ENCODE measurements at regions of chr1 and their contacts with region 1.

Region 1: DNA sequence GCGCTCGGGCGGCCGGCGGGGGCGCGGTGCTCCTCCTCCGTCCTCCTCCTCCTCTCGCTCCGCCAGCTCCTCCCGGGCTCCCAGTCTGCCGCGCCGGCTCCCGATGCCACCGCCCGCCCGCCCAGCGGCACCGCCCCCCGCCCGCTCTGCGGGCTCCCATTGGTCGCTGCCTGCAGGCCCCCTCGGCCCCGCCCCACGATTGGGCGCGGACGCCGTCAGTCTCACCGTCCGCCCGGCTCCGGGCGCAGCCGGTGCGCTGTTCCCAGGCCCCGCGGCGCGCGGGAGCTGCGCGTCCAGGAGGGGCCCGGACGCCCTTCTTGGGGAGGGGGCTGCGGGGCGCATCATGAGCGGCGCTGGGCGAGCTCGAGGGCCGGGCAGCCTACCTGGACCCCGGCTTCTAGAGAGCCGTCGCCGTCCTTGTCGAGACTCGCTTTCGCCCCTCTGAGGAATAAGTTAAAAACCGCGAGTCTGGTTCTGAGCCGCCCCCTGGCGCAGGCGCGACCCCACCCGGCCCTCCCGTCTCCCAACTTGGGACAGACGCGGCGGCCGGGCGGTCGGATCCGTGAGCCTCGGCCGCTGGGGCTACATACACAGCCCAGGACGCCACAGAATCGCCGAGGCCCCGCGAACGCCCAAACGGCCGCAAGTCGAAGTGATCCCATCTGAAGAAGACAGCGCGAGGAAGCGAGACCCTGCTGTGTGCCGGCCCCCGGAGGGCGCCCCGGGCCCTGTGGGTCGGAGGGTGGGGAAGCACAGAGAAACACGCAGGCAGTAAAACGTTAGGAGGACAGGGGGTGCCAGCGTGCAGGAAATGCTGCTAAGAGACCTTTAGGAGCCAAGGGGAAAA is at the start of gene SIPA1L2:
- DNase-seq: peak; percentile 97
- ATAC-seq: peak; percentile 88
- H3K4me3 ChIP-seq: peak within 1 kb of the TSS; percentile 77
- H3K27ac ChIP-seq: peak within 1 kb of the TSS; percentile 30
- H3K4me1 ChIP-seq: peaks cover 34% of the 10 kb centered on the region
- H3K27me3 ChIP-seq: no peaks in the 10 kb centered on the region
- CTCF ChIP-seq: peak; percentile 83
- total RNA-seq, gene SIPA1L2: 8.9 and 9.8 TPM in 2 replicates

Region 2: DNA sequence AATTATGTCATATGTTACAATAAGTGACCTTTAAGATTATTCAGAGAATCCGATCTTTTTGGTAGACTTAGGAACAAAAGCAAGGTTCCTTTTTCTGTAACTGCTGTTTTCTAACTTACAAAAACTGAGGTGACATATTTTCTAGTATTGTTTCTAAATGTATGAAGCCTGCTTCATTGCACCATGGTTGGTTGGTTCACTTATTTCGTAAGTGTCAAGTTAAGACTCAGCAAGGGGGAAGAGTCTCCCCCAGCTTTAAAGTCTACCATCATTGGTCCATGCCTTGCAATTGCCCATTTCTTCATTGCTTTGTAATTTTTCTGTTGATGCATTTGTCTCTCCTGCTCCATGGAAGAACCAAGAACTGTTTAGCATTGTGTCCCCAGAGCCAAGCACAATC is 866.8 kb before region 1 on chr1:
- CTCF ChIA-PET with region 1: interaction called, 4 read pairs
- POLR2A ChIA-PET with region 1: interaction called, 19 read pairs
- intact Hi-C with region 1: no loop called
- DNase-seq: no peak
- ATAC-seq: no peak
- H3K4me3 ChIP-seq: no peak overlapping the region
- H3K27ac ChIP-seq: no peak overlapping the region
- H3K4me1 ChIP-seq: peaks cover 10% of the 10 kb centered on the region; the same call in 1 of the 2 replicates
- H3K27me3 ChIP-seq: no peaks in the 10 kb centered on the region
- CTCF ChIP-seq: no peak

Region 3: DNA sequence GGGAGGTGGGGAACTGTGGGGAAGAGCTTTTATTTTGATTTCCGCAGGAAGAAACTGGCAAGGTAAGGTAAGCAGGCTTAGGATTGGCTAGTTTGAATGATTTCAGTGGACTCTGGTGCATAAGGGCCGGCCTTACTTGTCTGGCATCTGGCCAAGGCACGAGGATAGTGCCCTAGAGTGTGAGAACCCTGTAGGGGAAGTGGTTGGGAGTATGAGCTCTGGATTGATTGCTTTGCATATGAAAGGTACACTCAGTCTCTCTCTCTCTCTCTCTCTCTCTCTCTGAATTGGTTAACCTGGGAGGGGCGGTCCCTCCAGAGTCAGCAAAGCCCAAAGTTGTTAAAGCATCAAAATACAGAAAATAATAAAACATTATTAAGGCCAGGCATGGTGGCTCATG is 463.3 kb before region 1 on chr1:
- CTCF ChIA-PET with region 1: no interaction called
- POLR2A ChIA-PET with region 1: no interaction called
- intact Hi-C with region 1: loop called (anchors 1 kb)
- DNase-seq: no peak
- ATAC-seq: no peak
- H3K4me3 ChIP-seq: no peak overlapping the region
- H3K27ac ChIP-seq: no peak overlapping the region
- H3K4me1 ChIP-seq: peaks cover 29% of the 10 kb centered on the region
- H3K27me3 ChIP-seq: no peaks in the 10 kb centered on the region
- CTCF ChIP-seq: no peak

Region 4: GRCh38 chr1:232428786-232429530 is 201.3 kb before region 1 on chr1:
- CTCF ChIA-PET with region 1: interaction called, 4 read pairs
- POLR2A ChIA-PET with region 1: no interaction called
- intact Hi-C with region 1: loop called (anchors 2 kb)
- DNase-seq: peak; percentile 62
- ATAC-seq: peak; percentile 58
- H3K4me3 ChIP-seq: no peak overlapping the region
- H3K27ac ChIP-seq: no peak overlapping the region
- H3K4me1 ChIP-seq: peaks cover 31% of the 10 kb centered on the region
- H3K27me3 ChIP-seq: no peaks in the 10 kb centered on the region
- CTCF ChIP-seq: no peak

Region 5: DNA sequence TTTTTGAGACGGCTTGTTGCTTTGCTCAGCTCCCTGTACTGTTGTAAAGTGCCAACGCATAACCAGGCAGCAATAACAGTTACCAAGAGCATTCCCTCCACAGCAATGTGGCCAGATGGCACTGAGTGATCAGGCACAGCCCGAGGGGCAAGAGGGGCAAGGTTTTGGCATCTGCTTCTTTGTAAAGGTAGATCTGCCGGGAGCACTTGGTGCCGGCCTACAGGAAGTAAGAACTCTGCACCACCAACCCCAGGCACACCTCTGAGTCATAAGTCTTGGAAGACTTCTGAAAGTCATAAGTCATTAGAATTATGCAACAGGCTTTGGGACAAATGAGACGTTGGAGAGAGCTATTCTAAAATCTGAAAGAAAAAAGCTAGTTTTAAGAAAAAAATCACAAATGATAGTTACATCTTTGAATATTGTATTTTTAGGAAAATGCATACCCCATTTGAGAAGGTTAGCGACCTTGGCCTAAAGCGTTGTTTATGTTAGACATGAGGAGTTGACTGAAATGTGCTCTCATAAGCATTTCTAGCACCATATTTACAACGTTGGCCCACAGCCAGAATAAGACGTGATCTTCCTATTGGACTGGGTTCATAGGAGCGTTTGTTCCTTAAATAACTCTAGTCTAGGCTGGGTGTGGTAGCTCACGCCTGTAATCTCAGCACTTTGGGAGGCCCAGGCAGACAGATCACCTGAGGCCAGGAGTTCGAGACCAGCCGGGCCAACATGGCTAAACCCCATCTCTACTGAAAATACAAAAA is 137.2 kb after region 1 on chr1:
- CTCF ChIA-PET with region 1: no interaction called
- POLR2A ChIA-PET with region 1: no interaction called
- intact Hi-C with region 1: no loop called
- DNase-seq: peak; percentile 94
- ATAC-seq: peak; percentile 83
- H3K4me3 ChIP-seq: no peak overlapping the region
- H3K27ac ChIP-seq: peak overlapping the region; percentile 22
- H3K4me1 ChIP-seq: peaks cover 15% of the 10 kb centered on the region
- H3K27me3 ChIP-seq: no peaks in the 10 kb centered on the region
- CTCF ChIP-seq: no peak

Region 6: GRCh38 chr1:232844791-232845190 is 214.5 kb after region 1 on chr1:
- CTCF ChIA-PET with region 1: no interaction called
- POLR2A ChIA-PET with region 1: no interaction called
- intact Hi-C with region 1: no loop called
- DNase-seq: peak; percentile 34
- ATAC-seq: no peak
- H3K4me3 ChIP-seq: no peak overlapping the region
- H3K27ac ChIP-seq: no peak overlapping the region
- H3K4me1 ChIP-seq: no peaks in the 10 kb centered on the region
- H3K27me3 ChIP-seq: no peaks in the 10 kb centered on the region
- CTCF ChIP-seq: no peak

Region 7: GRCh38 chr1:232988572-232989040 is 358.3 kb after region 1 on chr1:
- CTCF ChIA-PET with region 1: no interaction called
- POLR2A ChIA-PET with region 1: no interaction called
- intact Hi-C with region 1: loop called (anchors 10 kb)
- DNase-seq: peak; percentile 79
- ATAC-seq: peak; percentile 91
- H3K4me3 ChIP-seq: no peak overlapping the region
- H3K27ac ChIP-seq: no peak overlapping the region
- H3K4me1 ChIP-seq: peaks cover 11% of the 10 kb centered on the region
- H3K27me3 ChIP-seq: no peaks in the 10 kb centered on the region
- CTCF ChIP-seq: no peak

Region 8: DNA sequence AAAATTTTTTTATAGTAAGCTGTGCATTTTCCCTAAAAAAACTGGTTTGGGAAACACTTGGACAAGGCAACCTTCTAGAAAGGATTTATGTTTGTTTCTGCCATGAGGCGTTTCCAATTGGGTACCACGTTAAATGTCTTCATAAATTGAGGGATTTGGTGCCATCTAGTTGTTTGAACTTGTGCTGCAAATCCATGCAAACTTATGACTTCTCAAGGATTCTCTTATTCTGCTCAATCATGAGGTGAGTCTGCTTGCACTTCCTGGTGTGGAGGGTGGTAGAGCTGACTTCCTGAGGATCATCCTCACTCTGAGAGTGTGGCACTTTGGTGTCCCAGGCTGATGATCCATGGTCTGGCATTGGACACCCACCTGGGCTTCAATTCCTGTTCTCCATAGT is 542.0 kb after region 1 on chr1:
- CTCF ChIA-PET with region 1: interaction called, 3 read pairs
- POLR2A ChIA-PET with region 1: interaction called, 4 read pairs
- intact Hi-C with region 1: loop called (anchors 1 kb)
- DNase-seq: peak; percentile 89
- ATAC-seq: peak; percentile 75
- H3K4me3 ChIP-seq: no peak overlapping the region
- H3K27ac ChIP-seq: no peak overlapping the region
- H3K4me1 ChIP-seq: peaks cover 12% of the 10 kb centered on the region; the same call in 1 of the 2 replicates
- H3K27me3 ChIP-seq: no peaks in the 10 kb centered on the region
- CTCF ChIP-seq: peak; percentile 89

Measured in PC-3 (cell line).